Activated CD4-positive, alpha-beta T cell treated with anti-CD3 and anti-CD28 coated beads for 36 hours (primary cell): ENCODE measurements at regions of chr5 and their contacts with region 1.

Region 1: DNA sequence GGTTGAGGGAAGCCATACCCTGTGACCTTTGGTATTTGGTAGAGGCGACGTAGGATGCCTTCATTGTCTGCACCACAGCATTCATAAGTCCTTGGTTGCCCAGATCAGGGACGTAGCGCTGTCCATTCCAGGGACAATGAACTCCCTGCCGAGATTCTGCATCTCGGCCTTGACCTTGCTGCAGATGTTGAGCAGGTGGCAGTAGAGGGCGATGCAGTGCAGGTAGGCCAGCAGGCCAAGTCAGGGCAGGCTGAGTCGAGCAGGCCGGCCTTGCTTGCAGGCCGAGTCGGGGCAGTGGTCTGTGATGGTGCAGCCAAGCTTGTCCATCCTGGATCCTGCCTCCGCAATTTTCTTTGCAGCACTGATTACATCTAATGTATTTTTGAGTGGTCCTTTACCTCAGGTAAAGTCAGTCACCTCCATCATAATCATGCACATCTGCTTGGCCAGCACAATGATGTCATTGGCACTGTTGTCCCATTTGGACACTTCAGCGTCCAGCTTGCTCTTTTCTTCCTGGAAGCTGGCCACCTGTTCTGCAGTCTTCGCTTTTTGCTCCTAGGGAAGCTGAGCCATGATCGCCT is 93.4 kb upstream of the CCDC112 start:
- DNase-seq: peak; percentile 42
- ATAC-seq: no peak
- H3K4me3 Mint-ChIP-seq: no peak overlapping the region
- H3K27ac Mint-ChIP-seq: no peak overlapping the region
- H3K4me1 Mint-ChIP-seq: no peaks in the 10 kb centered on the region
- H3K27me3 Mint-ChIP-seq: peaks cover 2% of the 10 kb centered on the region

Region 2: DNA sequence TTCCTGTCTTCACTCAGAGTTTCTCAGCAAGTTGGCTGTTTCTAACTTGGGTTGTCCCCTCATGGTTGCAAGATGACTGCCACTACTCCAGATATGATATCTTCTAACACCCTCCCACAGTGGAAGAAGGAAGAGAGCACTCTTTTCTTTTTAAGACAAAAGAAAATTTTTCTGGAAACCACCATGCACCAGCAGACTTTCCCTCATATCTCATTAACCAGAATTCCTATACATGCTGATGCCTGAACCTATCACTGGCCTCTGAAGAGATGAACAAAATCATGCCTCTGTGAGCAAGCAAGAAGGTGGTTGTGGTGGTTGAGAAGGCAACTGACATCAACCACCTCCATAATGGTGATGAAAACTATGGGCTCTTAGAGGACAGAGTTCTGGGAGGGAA is 97.9 kb after region 1 on chr5:
- CTCF ChIA-PET with region 1: no interaction called
- POLR2A ChIA-PET with region 1: no interaction called
- intact Hi-C with region 1: no loop called
- DNase-seq: peak; percentile 45
- ATAC-seq: peak; percentile 94
- H3K4me3 Mint-ChIP-seq: no peak overlapping the region
- H3K27ac Mint-ChIP-seq: no peak overlapping the region
- H3K4me1 Mint-ChIP-seq: peaks cover 28% of the 10 kb centered on the region
- H3K27me3 Mint-ChIP-seq: peaks cover 9% of the 10 kb centered on the region

Region 3: DNA sequence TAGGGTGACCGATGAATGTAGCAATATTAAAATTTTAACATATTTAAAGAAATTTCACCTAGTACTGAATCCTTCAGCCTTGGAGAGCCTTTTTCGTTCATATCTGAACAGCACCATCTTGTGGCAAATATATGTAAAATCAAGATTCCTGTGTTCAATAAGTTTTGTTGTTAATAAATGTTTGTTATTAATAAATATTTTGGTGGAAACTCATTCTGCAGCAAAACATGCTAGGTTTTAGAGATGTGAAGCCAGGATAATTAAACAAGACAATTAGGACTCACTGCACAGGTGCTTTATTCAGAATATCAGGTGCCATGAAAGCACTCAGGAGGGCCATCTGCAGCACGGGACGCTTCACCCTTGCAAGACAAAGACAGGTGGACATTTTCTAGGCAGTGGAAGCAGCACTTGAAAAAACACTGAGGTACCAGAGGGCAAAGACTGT is 196.7 kb after region 1 on chr5:
- CTCF ChIA-PET with region 1: interaction called, 3 read pairs
- POLR2A ChIA-PET with region 1: no interaction called
- intact Hi-C with region 1: loop called in 1 of 2 experiments (anchors 5 kb)
- DNase-seq: no peak
- ATAC-seq: no peak
- H3K4me3 Mint-ChIP-seq: no peak overlapping the region
- H3K27ac Mint-ChIP-seq: no peak overlapping the region
- H3K4me1 Mint-ChIP-seq: no peaks in the 10 kb centered on the region
- H3K27me3 Mint-ChIP-seq: no peaks in the 10 kb centered on the region